Naive thymus-derived CD4-positive, alpha-beta T cell (primary cell): ENCODE measurements at regions of chr17 and their contacts with region 1.

Region 1: GRCh38 chr17:5191541-5192417 is at the start of gene ZNF594:
- DNase-seq: peak; percentile 92 to 97 (median 95)
- ATAC-seq: peak; percentile 100
- H3K4me3 ChIP-seq: peak within 1 kb of the TSS; percentile 55
- H3K4me3 Mint-ChIP-seq: peak within 1 kb of the TSS; percentile 91 to 96 (median 94)
- H3K27ac ChIP-seq: peak within 1 kb of the TSS; percentile 82
- H3K27ac Mint-ChIP-seq: peak within 1 kb of the TSS; percentile 91 to 96 (median 92)
- H3K4me1 ChIP-seq: peaks cover 9 to 13% of the 10 kb centered on the region in 2 donors
- H3K4me1 Mint-ChIP-seq: peaks cover 15 to 39% (median 30%) of the 10 kb centered on the region in 7 donors
- H3K27me3 ChIP-seq: no peaks in the 10 kb centered on the region
- H3K27me3 Mint-ChIP-seq: no peaks in the 10 kb centered on the region
- total RNA-seq, gene ZNF594: 4.8 to 35.7 (median 11.6) TPM

Region 2: DNA sequence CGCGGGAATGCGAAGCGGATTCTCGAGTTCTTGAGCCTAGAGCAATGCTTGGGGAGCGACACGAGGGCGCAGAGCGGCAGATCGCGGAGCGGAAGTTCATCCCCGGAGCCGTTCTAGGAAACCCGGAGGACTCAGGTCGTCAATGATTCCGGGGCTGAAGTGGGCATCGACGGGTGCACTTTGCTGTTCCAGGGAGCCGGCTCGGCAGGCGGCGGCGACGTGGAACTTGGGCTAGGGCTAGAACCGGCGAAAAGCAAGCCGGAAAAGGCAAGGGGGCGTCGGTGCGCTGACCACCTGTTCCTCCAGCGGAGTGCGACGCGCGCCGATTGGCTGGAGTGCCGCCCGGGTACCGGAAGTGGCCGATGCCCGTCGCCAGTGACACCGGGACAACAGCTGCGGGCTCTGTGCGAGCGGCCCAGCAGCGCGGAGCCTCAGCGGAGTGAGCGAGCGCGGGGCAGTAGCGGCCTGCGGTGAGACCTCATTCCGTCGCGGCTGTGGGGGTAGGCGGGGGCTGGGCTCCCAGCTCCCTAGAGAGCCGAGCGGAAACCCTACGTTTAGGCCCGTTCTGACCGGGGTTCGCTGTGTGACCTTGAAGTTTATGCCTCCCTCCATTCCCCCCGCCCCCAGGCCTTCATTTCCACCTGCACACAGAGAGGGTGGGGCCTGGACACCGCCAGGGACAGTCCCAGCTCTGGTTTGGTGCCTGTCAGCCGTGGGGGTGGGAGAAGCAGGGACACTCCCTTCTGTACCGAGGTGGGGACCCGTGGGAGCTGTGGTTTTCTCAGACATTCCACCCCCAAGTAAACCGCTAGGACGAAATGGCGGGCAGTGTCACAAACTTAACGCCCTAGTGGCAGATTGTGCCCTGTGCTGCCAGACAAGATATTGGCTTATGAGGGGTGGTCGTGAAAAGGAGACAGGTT is 113.4 kb before region 1 on chr17 and contains the start of gene ZFP3:
- CTCF ChIA-PET with region 1: no interaction called
- POLR2A ChIA-PET with region 1: no interaction called
- intact Hi-C with region 1: loop called in 1 of 2 experiments (anchors 1 kb)
- DNase-seq: peak; percentile 47 to 77 (median 67)
- ATAC-seq: peak; percentile 85
- H3K4me3 ChIP-seq: peak within 1 kb of the TSS; percentile 81
- H3K4me3 Mint-ChIP-seq: peak within 1 kb of the TSS; percentile 89 to 98 (median 95)
- H3K27ac ChIP-seq: peak within 1 kb of the TSS; percentile 81
- H3K27ac Mint-ChIP-seq: peak within 1 kb of the TSS; percentile 87 to 96 (median 94)
- H3K4me1 ChIP-seq: peaks cover 13 to 15% of the 10 kb centered on the region in 2 donors
- H3K4me1 Mint-ChIP-seq: peaks cover 12 to 41% (median 35%) of the 10 kb centered on the region in 7 donors
- H3K27me3 ChIP-seq: no peaks in the 10 kb centered on the region
- H3K27me3 Mint-ChIP-seq: peaks cover 0 to 2% (median 0%) of the 10 kb centered on the region in 5 donors
- total RNA-seq, gene ZFP3: 3.5 to 14.8 (median 5.7) TPM

Region 3: DNA sequence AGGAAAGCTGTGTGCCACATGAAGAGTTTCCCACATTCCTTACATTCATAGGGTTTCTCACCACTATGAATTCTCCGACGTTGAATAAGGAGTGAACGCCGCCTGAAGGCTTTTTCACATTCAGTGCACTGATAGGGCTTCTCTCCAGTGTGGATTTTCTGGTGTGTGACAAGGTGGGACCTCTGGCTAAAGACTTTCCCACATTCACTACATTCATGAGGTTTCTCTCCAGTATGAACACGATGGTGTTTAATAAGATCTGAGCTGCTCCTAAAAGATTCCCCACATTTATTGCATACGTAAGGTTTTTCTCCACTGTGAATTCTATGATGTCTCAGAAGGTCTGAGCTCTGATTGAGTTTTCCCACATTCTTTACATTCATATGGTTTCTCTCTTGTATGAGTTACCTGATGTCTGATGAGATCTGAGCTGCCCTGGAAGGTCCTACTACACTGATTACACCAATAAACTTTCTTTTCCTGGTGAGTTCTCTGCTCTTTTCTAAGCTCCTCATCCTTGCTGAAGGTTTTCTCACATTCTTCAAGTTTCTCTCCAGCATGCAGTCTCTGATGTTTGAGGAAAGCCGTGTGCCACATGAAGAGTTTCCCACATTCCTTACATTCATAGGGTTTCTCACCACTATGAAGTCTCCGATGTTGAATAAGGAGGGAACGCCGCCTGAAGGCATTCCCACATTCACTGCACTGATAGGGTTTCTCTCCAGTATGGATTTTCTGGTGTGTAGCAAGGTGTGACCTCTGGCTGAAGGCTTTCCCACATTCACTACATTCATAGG is 10.1 kb before region 1 on chr17:
- CTCF ChIA-PET with region 1: no interaction called
- POLR2A ChIA-PET with region 1: interaction called, 18 read pairs
- intact Hi-C with region 1: no loop called
- DNase-seq: no peak
- ATAC-seq: no peak
- H3K4me3 ChIP-seq: peak overlapping the region; percentile 10
- H3K4me3 Mint-ChIP-seq: peak overlapping the region in 2 of 10 donors; percentile 8 to 21
- H3K27ac ChIP-seq: no peak overlapping the region
- H3K27ac Mint-ChIP-seq: peak overlapping the region in 2 of 9 donors; percentile 15 to 25
- H3K4me1 ChIP-seq: no peaks in the 10 kb centered on the region
- H3K4me1 Mint-ChIP-seq: peaks cover 0 to under 1% (median 0%) of the 10 kb centered on the region in 7 donors
- H3K27me3 ChIP-seq: no peaks in the 10 kb centered on the region
- H3K27me3 Mint-ChIP-seq: no peaks in the 10 kb centered on the region

Region 4: DNA sequence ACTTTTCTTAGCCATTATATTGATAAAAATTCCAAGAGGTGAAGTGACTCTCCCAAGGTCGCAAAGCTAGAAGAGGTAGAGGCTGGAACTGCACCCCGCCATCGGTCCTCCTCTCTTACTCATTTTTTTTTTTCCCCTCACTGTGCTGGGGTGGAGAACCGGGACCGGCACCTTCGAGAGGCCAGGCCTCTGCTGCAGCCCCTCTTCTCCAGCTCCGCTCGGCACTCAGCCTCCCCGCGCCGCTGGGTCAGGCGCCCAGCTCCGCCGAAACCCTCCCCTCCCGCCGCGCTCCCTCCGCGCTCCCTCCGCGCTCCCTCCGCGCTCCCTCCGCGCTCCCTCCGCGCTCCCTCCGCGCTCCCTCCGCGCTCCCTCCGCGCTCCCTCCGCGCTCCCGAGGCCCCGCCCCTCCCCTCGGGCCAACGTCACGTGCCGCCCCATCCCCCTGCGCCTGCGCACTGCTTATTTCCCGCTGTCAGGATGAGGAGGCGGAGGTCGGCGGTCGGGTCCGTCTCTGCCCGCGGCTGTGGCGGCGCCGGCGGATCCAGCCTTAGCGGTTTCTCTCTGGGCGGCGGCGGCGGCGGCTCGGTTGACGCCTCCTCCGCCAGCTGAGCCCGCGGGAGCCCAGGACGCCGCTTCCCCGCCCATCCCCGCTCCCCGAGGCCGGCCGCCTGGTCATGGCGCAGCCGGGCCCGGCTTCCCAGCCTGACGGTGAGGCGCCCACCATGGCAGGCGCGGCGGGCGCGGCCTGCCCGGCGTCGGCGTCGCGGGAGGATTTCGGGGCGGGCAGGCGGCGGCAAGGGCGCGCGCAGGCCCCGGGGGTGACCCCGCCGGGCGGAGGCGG is 90.3 kb after region 1 on chr17 and contains the start of gene RABEP1:
- CTCF ChIA-PET with region 1: no interaction called
- POLR2A ChIA-PET with region 1: interaction called, 5 read pairs
- intact Hi-C with region 1: loop called in 1 of 2 experiments (anchors 1 kb)
- DNase-seq: peak; percentile 88 to 98 (median 92)
- ATAC-seq: peak; percentile 94
- H3K4me3 ChIP-seq: peak within 1 kb of the TSS; percentile 54
- H3K4me3 Mint-ChIP-seq: peak within 1 kb of the TSS; percentile 72 to 95 (median 88)
- H3K27ac ChIP-seq: peak within 1 kb of the TSS; percentile 86
- H3K27ac Mint-ChIP-seq: peak within 1 kb of the TSS; percentile 64 to 93 (median 88)
- H3K4me1 ChIP-seq: peaks cover 16 to 25% of the 10 kb centered on the region in 2 donors
- H3K4me1 Mint-ChIP-seq: peaks cover 24 to 47% (median 37%) of the 10 kb centered on the region in 7 donors
- H3K27me3 ChIP-seq: no peaks in the 10 kb centered on the region
- H3K27me3 Mint-ChIP-seq: no peaks in the 10 kb centered on the region
- total RNA-seq, gene RABEP1: 37.3 to 58.5 (median 44.6) TPM

Region 5: GRCh38 chr17:5438716-5439445 is 247.1 kb after region 1 on chr17 and contains the start of gene C1QBP:
- CTCF ChIA-PET with region 1: interaction called, 7 read pairs
- POLR2A ChIA-PET with region 1: no interaction called
- intact Hi-C with region 1: loop called (anchors 1 kb)
- DNase-seq: peak; percentile 85 to 96 (median 91)
- ATAC-seq: peak; percentile 98
- H3K4me3 ChIP-seq: peak within 1 kb of the TSS; percentile 80
- H3K4me3 Mint-ChIP-seq: peak within 1 kb of the TSS; percentile 80 to 95 (median 90)
- H3K27ac ChIP-seq: peak within 1 kb of the TSS; percentile 89
- H3K27ac Mint-ChIP-seq: peak within 1 kb of the TSS; percentile 90 to 98 (median 94)
- H3K4me1 ChIP-seq: peaks cover 19 to 28% of the 10 kb centered on the region in 2 donors
- H3K4me1 Mint-ChIP-seq: peaks cover 16 to 43% (median 37%) of the 10 kb centered on the region in 7 donors
- H3K27me3 ChIP-seq: no peaks in the 10 kb centered on the region
- H3K27me3 Mint-ChIP-seq: no peaks in the 10 kb centered on the region
- total RNA-seq, gene C1QBP: 58.0 to 162 (median 82.3) TPM

Region 6: GRCh38 chr17:5486204-5487124 is 294.7 kb after region 1 on chr17 and contains the start of gene MIS12:
- CTCF ChIA-PET with region 1: no interaction called
- POLR2A ChIA-PET with region 1: no interaction called
- intact Hi-C with region 1: loop called (anchors 1 kb)
- DNase-seq: peak; percentile 78 to 100 (median 97)
- ATAC-seq: peak; percentile 93
- H3K4me3 ChIP-seq: peak within 1 kb of the TSS; percentile 94
- H3K4me3 Mint-ChIP-seq: peak within 1 kb of the TSS; percentile 88 to 97 (median 94)
- H3K27ac ChIP-seq: peak within 1 kb of the TSS; percentile 98
- H3K27ac Mint-ChIP-seq: peak within 1 kb of the TSS; percentile 95 to 99 (median 98)
- H3K4me1 ChIP-seq: peaks cover 21 to 28% of the 10 kb centered on the region in 2 donors
- H3K4me1 Mint-ChIP-seq: peaks cover 22 to 77% (median 66%) of the 10 kb centered on the region in 7 donors
- H3K27me3 ChIP-seq: no peaks in the 10 kb centered on the region
- H3K27me3 Mint-ChIP-seq: no peaks in the 10 kb centered on the region
- total RNA-seq, gene MIS12: 16.3 to 53.6 (median 38.4) TPM